ENCODE measurements at regions of chr9 and their contacts with region 1.

Region 1: GRCh38 chr9:130780865-130781504 is 54.1 kb upstream of the ABL1 start:
- DNase-seq: peak in 1 of 3 donors; percentile 44
- ATAC-seq: peak; percentile 70
- H3K4me3 ChIP-seq: no peak overlapping the region
- H3K4me1 ChIP-seq: no peaks in the 10 kb centered on the region
- CTCF ChIP-seq: no peak

Region 2: GRCh38 chr9:130847327-130848217 is 66.6 kb after region 1 on chr9:
- intact Hi-C with region 1: loop called in 1 of 2 experiments (anchors 5 kb)
- DNase-seq: peak in 1 of 3 donors; percentile 38
- ATAC-seq: peak; percentile 71
- H3K4me3 ChIP-seq: no peak overlapping the region
- H3K4me1 ChIP-seq: peaks cover 12% of the 10 kb centered on the region
- CTCF ChIP-seq: no peak